ENCODE measurements at regions of chr3 and their contacts with region 1.

Region 1: DNA sequence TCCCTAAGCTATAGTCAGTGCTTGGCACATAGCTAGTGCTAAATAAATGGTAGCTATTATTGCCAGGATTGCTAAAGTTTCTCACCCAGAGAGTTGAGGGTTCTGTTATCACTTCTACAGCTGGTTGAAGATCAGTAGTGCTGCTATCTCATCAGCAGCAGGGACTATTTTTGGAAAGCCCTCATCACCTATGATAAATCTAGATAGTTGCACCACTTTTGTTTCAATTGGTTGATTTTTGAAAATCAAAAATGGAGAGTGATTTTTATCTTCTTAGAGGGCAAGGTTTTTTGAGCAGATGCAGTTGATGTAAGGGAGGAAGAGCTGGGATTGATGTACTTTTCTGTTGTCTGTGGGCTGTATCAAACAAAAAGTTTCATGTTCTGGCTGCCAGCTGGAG is 101.6 kb downstream of the ST6GAL1 start:
- DNase-seq: no peak
- H3K4me3 ChIP-seq: peak overlapping the region; percentile 42
- H3K27ac ChIP-seq: peak overlapping the region; percentile 98
- H3K4me1 ChIP-seq: peaks cover 62% of the 10 kb centered on the region
- CTCF ChIP-seq: no peak

Region 2: GRCh38 chr3:187044206-187044605 is 12.3 kb after region 1 on chr3:
- CTCF ChIA-PET with region 1: no interaction called
- POLR2A ChIA-PET with region 1: interaction called, 15 read pairs
- intact Hi-C with region 1: loop called (anchors 1 kb)
- DNase-seq: peak; percentile 84
- H3K4me3 ChIP-seq: peak overlapping the region; percentile 56
- H3K27ac ChIP-seq: peak overlapping the region; percentile 90
- H3K4me1 ChIP-seq: peaks cover 72% of the 10 kb centered on the region
- CTCF ChIP-seq: no peak

Measured in OCI-LY7 (cell line).